ENCODE measurements at regions of chr3 and their contacts with region 1.

Region 1: GRCh38 chr3:53236112-53236841 is 19.5 kb downstream of the TKT start:
- DNase-seq: peak; percentile 81
- H3K4me3 Mint-ChIP-seq: no peak overlapping the region
- H3K27ac Mint-ChIP-seq: peak overlapping the region; percentile 66
- H3K4me1 Mint-ChIP-seq: peaks cover 30% of the 10 kb centered on the region
- H3K27me3 Mint-ChIP-seq: no peaks in the 10 kb centered on the region
- CTCF ChIP-seq: no peak

Region 2: DNA sequence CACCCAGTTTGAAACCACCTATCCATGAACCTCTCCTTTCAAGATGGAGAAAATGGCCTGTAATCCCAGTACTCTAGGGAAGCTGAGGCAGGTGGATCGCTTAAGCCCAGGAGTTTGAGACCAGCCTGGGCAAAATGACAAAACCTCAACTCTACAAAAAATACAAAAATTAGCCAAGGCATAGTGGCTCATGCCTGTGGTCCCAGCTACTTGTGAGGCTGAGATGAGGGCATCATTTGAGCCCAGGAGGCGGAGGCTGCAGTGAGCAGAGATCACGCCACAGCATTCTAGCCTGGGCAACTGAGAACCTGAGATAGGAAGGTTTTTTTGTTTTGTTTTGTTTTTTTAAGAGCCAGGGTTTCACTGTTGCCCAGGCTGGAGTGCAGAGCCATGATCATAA is 14.2 kb after region 1 on chr3:
- CTCF ChIA-PET with region 1: interaction called, 3 read pairs
- POLR2A ChIA-PET with region 1: interaction called, 42 read pairs
- intact Hi-C with region 1: loop called (anchors 2 kb)
- DNase-seq: no peak
- H3K4me3 Mint-ChIP-seq: no peak overlapping the region
- H3K27ac Mint-ChIP-seq: peak overlapping the region; percentile 9
- H3K4me1 Mint-ChIP-seq: peaks cover 32% of the 10 kb centered on the region
- H3K27me3 Mint-ChIP-seq: no peaks in the 10 kb centered on the region
- CTCF ChIP-seq: no peak

Region 3: DNA sequence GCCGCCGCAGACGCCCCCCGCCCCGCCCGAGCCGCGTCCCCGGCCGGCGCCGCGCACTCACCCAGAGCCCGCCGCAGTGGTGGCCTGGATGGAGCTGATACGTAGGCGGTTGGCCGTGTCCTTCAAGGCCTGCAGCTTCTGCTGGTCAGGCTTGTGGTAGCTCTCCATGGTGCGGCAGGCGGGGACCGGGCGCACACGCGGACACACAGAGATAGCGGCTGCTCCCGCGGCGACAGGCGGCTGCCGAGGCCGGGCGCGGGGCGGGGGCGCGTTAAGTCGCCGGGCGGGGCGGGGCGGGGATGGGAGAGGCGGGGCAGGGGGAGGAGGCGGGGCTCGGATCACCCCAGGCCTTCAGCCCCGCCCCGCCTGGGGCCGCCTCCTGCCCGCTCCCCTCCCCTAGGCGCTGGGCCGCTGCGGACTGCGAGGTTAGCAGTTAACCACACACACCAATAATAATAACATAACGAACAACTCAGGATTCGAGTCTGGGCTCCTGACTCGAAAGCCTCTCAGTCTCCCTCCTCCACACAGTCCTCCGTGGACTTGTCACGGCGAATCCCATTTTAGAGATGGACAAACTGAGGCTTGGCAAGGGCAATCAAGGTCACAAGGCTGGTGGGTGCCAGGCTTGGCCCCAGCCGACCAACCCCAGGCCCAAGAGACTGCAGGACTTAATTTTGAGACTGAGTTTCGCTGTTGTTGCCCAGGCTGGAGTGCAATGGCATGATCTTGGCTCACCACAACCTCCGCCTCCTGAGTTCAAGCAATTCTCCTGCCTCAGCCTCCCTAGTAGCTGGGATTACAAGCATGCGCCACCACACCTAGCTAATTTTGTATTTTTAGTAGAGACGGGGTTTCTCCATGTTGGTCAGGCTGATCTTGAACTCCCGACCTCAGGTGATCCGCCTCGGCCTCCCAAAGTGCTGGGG is 19.8 kb after region 1 on chr3 and contains the start of gene TKT:
- CTCF ChIA-PET with region 1: interaction called, 3 read pairs
- POLR2A ChIA-PET with region 1: interaction called, 42 read pairs
- intact Hi-C with region 1: loop called (anchors 2 kb)
- DNase-seq: peak; percentile 84
- H3K4me3 Mint-ChIP-seq: peak within 1 kb of the TSS; percentile 95
- H3K27ac Mint-ChIP-seq: peak within 1 kb of the TSS; percentile 67
- H3K4me1 Mint-ChIP-seq: peaks cover 23% of the 10 kb centered on the region
- H3K27me3 Mint-ChIP-seq: no peaks in the 10 kb centered on the region
- CTCF ChIP-seq: no peak
- total RNA-seq, gene TKT: 179 and 326 TPM in 2 replicates

Region 4: DNA sequence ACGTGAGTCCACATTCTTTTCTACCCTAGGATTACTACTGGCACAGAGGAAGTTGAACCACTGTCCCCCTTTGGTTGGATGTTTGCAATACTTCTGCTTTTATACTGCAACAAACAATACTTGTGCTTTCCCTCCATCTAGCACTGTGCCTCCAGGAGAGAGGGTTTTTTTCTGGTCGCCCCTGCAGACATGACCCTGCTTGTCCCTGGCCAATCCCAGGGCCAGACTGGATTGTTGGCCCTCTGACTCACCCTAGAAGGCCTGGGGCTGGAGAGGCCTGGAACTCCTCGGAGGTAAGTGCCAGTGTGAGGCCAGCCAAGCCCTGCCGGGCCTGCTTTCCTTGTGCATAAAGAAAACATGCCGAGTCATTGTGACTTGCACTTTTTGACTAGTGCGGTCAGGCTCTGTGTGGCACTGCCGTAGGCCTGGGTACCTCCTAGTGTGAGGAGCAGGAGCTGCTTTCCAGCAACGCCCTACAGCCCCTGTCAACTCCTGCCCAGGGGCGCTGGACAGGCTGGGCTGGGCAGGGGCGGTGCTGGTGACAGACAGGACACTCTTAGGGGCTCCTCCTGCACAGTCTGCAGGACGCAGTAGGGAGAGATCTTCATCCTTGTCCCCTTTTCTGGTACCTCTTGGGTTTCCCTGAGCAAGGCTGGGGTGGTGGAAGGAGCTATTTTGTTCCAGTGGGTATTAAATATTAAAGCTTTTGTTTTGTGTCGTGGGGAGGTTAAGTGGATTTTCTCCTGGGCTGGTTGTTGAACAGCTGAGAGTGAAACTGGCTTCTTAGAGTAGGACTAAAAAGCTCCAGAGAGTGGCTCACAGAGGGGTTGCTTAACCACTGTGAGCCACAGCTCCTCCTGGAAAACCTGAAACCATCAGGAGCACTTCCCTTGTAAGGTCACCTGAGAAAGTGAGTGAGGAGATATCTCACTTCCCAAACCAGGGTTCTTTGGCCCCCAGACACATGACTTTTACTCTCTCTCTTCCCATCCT is 33.9 kb after region 1 on chr3:
- CTCF ChIA-PET with region 1: interaction called, 5 read pairs
- POLR2A ChIA-PET with region 1: no interaction called
- intact Hi-C with region 1: loop called (anchors 2 kb)
- DNase-seq: peak; percentile 100
- H3K4me3 Mint-ChIP-seq: peak overlapping the region; percentile 53
- H3K27ac Mint-ChIP-seq: peak overlapping the region; percentile 99
- H3K4me1 Mint-ChIP-seq: peaks cover 11% of the 10 kb centered on the region
- H3K27me3 Mint-ChIP-seq: no peaks in the 10 kb centered on the region
- CTCF ChIP-seq: no peak